ENCODE measurements at regions of chr14 and their contacts with region 1.

Region 1: GRCh38 chr14:91228112-91229004 is 16.1 kb downstream of the GPR68 start:
- DNase-seq: peak; percentile 75
- H3K4me3 ChIP-seq: no peak overlapping the region
- H3K27ac ChIP-seq: no peak overlapping the region
- H3K4me1 ChIP-seq: peaks cover 10% of the 10 kb centered on the region
- H3K27me3 ChIP-seq: no peaks in the 10 kb centered on the region
- CTCF ChIP-seq: no peak
- POLR2A ChIP-seq: no peak

Region 2: GRCh38 chr14:90368946-90369721 is 859.2 kb before region 1 on chr14:
- CTCF ChIA-PET with region 1: no interaction called
- POLR2A ChIA-PET with region 1: interaction called, 15 read pairs
- dilution Hi-C with region 1: no loop called
- intact Hi-C with region 1: no loop called
- DNase-seq: peak; percentile 25
- H3K4me3 ChIP-seq: no peak overlapping the region
- H3K27ac ChIP-seq: no peak overlapping the region
- H3K4me1 ChIP-seq: no peaks in the 10 kb centered on the region
- H3K27me3 ChIP-seq: no peaks in the 10 kb centered on the region
- CTCF ChIP-seq: no peak
- POLR2A ChIP-seq: no peak

Measured in endothelial cell of umbilical vein (primary cell).